IMR-90 (cell line): ENCODE measurements at regions of chr20 and their contacts with region 1.

Region 1: DNA sequence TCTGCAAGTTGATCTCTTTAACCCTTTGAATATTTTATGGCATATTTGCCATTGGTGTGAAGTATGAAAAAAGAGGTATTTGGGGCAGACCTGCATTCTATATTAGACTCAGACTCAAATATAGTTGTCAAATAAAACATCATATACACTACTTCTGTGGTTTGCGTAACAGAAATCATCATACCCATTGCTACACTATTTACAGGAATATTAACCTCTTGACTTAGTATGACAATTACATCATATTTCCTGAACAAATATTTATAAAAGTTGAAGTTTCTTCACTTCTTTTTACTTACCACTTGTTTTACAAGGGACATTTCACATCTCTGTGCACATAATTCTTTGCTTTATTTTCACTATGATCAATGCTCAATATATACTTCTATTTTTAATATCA is 206.0 kb downstream of the HAO1 start:
- DNase-seq: no peak
- ATAC-seq: no peak
- H3K4me3 ChIP-seq: no peak overlapping the region
- H3K27ac ChIP-seq: no peak overlapping the region
- H3K4me1 ChIP-seq: no peaks in the 10 kb centered on the region
- H3K27me3 ChIP-seq: no peaks in the 10 kb centered on the region
- CTCF ChIP-seq: no peak
- POLR2A ChIP-seq: no peak
- RAD21 ChIP-seq: no peak

Region 2: DNA sequence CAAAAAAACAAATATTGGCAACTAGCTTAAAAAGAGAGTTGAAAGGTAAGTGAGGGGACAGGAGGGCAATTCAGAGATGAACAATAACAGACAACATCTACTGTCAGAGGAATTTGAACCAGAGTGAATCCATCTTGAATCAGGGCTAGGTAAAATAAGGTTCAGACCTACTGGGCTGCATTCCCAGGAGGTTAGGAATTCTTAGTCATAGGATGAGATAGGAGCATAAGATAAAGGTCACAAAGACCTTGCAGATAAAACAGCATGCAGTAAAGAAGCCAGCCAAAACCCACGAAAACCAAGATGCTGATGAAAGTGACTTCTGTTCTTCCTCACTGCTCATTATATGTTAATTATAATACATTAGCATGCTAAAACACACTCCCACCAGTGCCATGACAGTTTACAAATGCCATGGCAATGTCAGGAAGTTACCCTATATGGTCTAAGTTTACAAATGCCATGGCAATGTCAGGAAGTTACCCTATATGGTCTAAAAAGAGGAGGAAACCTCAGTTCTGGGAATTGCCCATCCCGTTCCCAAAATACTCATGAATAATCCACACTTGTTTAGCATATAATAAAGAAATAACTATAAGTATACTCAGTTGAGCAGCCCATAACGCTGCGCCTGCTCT is 42.5 kb before region 1 on chr20:
- CTCF ChIA-PET with region 1: interaction called, 5 read pairs
- POLR2A ChIA-PET with region 1: no interaction called
- dilution Hi-C with region 1: no loop called
- in situ Hi-C with region 1: no loop called
- intact Hi-C with region 1: loop called (anchors 2 kb)
- DNase-seq: no peak
- ATAC-seq: no peak
- H3K4me3 ChIP-seq: no peak overlapping the region
- H3K27ac ChIP-seq: no peak overlapping the region
- H3K4me1 ChIP-seq: no peaks in the 10 kb centered on the region
- H3K27me3 ChIP-seq: no peaks in the 10 kb centered on the region
- CTCF ChIP-seq: no peak
- POLR2A ChIP-seq: no peak
- RAD21 ChIP-seq: no peak